BJ (cell line): ENCODE measurements at regions of chr22 and their contacts with region 1.

Region 1: GRCh38 chr22:22787786-22788459 is 99.7 kb upstream of the IGLL5 start:
- DNase-seq: no peak
- H3K4me3 ChIP-seq: no peak overlapping the region
- H3K27me3 ChIP-seq: peaks cover 1% of the 10 kb centered on the region; the same call in 1 of the 2 replicates
- CTCF ChIP-seq: peak; percentile 87

Region 2: GRCh38 chr22:22770280-22770871 is 17.5 kb before region 1 on chr22:
- CTCF ChIA-PET with region 1: interaction called, 11 read pairs
- POLR2A ChIA-PET with region 1: no interaction called
- DNase-seq: no peak
- H3K4me3 ChIP-seq: no peak overlapping the region
- H3K27me3 ChIP-seq: no peaks in the 10 kb centered on the region; the same call in 1 of the 2 replicates
- CTCF ChIP-seq: peak; percentile 79

Region 3: GRCh38 chr22:22799561-22799960 is 11.6 kb after region 1 on chr22:
- CTCF ChIA-PET with region 1: interaction called, 10 read pairs
- POLR2A ChIA-PET with region 1: no interaction called
- DNase-seq: no peak
- H3K4me3 ChIP-seq: no peak overlapping the region
- H3K27me3 ChIP-seq: no peaks in the 10 kb centered on the region
- CTCF ChIP-seq: no peak

Region 4: DNA sequence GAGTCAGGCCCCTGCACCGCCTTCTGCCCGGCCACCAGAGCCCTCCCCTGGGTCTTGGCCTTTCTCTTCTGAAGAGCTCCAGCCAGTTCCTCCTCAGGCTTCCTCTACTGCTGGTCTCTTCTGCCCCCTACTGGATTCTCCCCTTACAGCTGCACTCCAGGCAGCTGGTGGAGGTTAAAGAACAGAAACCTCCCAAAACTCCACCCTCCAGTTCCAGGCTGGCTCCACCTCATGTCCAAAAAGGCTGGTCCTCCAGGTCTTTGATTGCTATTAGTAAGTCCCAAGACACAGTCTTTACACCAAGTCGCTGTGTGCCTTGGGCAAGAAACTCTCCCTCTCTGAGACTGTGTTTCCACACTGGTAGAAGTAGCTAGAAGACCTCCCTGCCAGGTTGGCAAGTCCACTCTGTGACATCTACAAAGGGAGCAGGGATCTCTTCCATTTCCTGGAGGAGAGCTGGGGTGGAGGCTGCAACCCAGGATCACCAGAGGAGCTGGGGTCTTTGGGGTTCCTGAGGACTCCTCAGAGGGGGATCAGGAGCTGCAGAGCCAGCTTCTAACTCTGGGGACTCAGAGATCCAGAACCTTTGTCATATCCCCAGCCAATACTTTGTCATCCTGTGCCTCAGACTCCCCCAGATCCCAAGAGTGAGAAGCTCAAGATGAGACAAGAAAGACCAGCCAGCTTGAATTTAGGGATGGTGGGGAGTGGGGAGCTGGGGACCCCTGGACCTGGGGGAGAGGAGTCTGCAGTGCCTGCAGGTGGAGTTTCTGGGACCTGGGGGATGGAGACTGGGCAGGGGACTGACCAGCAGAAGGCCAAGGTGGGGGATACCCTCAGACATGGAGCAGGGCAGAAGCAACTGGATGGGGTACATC is 96.3 kb after region 1 on chr22:
- CTCF ChIA-PET with region 1: interaction called, 15 read pairs
- POLR2A ChIA-PET with region 1: no interaction called
- DNase-seq: no peak
- H3K4me3 ChIP-seq: no peak overlapping the region
- H3K27me3 ChIP-seq: no peaks in the 10 kb centered on the region; the same call in 1 of the 2 replicates
- CTCF ChIP-seq: peak; percentile 57